Thyroid gland (tissue), 4 donors: ENCODE measurements at regions of chr14 and their contacts with region 1.

Region 1: GRCh38 chr14:89013084-89013504 is 188.6 kb downstream of the TTC8 start:
- DNase-seq: no peak
- H3K4me3 ChIP-seq: no peak overlapping the region
- H3K27ac ChIP-seq: no peak overlapping the region
- H3K4me1 ChIP-seq: no peaks in the 10 kb centered on the region
- H3K27me3 ChIP-seq: no peaks in the 10 kb centered on the region
- CTCF ChIP-seq: no peak
- POLR2A ChIP-seq: no peak

Region 2: GRCh38 chr14:88848571-88848970 is 164.5 kb before region 1 on chr14:
- intact Hi-C with region 1: no loop called
- DNase-seq: no peak
- H3K4me3 ChIP-seq: no peak overlapping the region
- H3K27ac ChIP-seq: peak overlapping the region in 1 of 3 donors; percentile 88
- H3K4me1 ChIP-seq: peaks cover 0 to 11% of the 10 kb centered on the region in 2 donors
- H3K27me3 ChIP-seq: no peaks in the 10 kb centered on the region
- CTCF ChIP-seq: no peak
- POLR2A ChIP-seq: no peak

Region 3: DNA sequence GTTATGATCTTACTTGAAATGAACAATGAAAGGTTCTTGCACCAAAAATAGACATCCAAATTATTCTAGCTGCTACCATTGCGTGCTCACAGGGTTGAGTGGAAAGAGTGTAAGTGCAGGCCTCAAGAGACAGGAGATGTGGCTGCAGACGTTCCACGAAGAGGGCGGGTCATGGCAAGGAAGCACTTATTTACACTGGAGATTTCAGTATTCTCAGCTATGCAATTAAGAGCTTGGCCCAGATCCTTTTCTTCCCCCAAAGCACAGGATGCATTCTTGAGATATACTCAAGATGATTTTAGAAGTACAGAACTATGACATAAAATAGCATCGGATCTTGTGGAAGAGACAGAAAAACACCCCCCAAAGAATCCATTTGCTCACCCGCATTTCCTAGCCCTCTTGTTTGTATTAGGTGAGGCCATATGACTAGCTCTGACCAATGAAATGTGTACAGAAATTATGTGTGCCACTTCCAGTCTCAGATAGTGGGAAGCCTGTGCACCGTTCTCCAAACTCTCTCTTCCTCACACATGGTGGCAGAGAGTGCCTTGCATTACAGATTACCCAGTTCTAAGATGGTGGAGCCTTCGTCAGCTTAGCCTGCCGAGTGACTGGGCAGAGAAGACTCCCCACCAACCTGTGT is 72.8 kb after region 1 on chr14:
- intact Hi-C with region 1: no loop called
- DNase-seq: peak in 1 of 2 donors; percentile 4
- H3K4me3 ChIP-seq: no peak overlapping the region
- H3K27ac ChIP-seq: no peak overlapping the region
- H3K4me1 ChIP-seq: no peaks in the 10 kb centered on the region
- H3K27me3 ChIP-seq: no peaks in the 10 kb centered on the region
- CTCF ChIP-seq: no peak
- POLR2A ChIP-seq: no peak

Region 4: GRCh38 chr14:90126260-90126659 is 1113.2 kb after region 1 on chr14:
- intact Hi-C with region 1: loop called (anchors 10 kb)
- DNase-seq: no peak
- H3K4me3 ChIP-seq: no peak overlapping the region
- H3K27ac ChIP-seq: no peak overlapping the region
- H3K4me1 ChIP-seq: no peaks in the 10 kb centered on the region
- H3K27me3 ChIP-seq: no peaks in the 10 kb centered on the region
- CTCF ChIP-seq: no peak
- POLR2A ChIP-seq: no peak